Calu3 (cell line): ENCODE measurements at regions of chr2 and their contacts with region 1.

Region 1: DNA sequence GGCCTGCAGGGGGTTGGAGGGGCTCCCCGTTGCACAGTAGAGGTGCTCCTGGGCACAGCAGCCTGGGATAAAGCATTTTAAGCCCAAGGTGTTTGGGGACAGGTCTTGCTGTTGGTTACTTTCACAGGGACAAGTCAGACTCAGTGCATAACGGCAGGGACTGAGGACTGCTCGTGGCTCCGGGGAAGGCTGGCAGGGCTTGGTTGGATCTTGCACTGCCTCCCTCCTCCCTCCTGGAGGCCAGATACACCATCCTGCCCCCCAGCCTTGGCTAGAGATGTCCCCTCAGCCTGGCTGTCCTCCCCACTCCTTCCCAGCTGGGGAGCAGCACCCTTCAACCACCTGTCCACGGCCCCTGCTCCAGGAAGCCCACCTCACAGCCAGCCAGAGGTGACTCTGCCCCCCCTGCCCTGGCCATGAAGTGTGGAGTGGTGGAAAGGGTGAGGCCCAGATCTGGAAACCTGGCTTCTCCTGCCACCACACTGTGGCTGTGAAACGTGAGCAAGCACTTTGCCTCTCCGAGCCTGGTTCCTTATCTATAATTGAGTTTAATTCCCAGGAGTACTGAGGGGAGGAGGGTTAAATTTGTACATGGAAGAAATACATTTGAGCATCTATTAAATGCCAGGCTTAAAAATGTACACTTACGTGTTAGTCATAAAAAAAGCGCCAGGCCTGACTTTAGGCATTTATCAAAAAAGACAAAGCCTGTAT is 67.1 kb upstream of the TAF1B start:
- DNase-seq: no peak
- H3K4me3 Mint-ChIP-seq: no peak overlapping the region
- H3K27ac Mint-ChIP-seq: no peak overlapping the region
- H3K4me1 Mint-ChIP-seq: no peaks in the 10 kb centered on the region
- H3K27me3 Mint-ChIP-seq: peaks cover 15% of the 10 kb centered on the region
- CTCF ChIP-seq: no peak

Region 2: GRCh38 chr2:9907396-9907795 is 131.2 kb after region 1 on chr2:
- CTCF ChIA-PET with region 1: interaction called, 12 read pairs
- intact Hi-C with region 1: no loop called
- DNase-seq: no peak
- H3K4me3 Mint-ChIP-seq: no peak overlapping the region
- H3K27ac Mint-ChIP-seq: no peak overlapping the region
- H3K4me1 Mint-ChIP-seq: peaks cover 13% of the 10 kb centered on the region
- H3K27me3 Mint-ChIP-seq: no peaks in the 10 kb centered on the region
- CTCF ChIP-seq: no peak